ENCODE measurements at regions of chr2 and their contacts with region 1.

Region 1: GRCh38 chr2:69643602-69644505 is at the start of gene AAK1:
- DNase-seq: peak; percentile 90
- H3K27ac ChIP-seq: peak within 1 kb of the TSS; percentile 98
- CTCF ChIP-seq: no peak

Region 2: GRCh38 chr2:71250945-71251344 is 1607.1 kb after region 1 on chr2:
- CTCF ChIA-PET with region 1: no interaction called
- POLR2A ChIA-PET with region 1: interaction called, 11 read pairs
- DNase-seq: no peak
- H3K27ac ChIP-seq: no peak overlapping the region
- CTCF ChIP-seq: no peak

Measured in RWPE1 (cell line).